Right lobe of liver (tissue), 6 donors: ENCODE measurements at regions of chr12 and their contacts with region 1.

Region 1: DNA sequence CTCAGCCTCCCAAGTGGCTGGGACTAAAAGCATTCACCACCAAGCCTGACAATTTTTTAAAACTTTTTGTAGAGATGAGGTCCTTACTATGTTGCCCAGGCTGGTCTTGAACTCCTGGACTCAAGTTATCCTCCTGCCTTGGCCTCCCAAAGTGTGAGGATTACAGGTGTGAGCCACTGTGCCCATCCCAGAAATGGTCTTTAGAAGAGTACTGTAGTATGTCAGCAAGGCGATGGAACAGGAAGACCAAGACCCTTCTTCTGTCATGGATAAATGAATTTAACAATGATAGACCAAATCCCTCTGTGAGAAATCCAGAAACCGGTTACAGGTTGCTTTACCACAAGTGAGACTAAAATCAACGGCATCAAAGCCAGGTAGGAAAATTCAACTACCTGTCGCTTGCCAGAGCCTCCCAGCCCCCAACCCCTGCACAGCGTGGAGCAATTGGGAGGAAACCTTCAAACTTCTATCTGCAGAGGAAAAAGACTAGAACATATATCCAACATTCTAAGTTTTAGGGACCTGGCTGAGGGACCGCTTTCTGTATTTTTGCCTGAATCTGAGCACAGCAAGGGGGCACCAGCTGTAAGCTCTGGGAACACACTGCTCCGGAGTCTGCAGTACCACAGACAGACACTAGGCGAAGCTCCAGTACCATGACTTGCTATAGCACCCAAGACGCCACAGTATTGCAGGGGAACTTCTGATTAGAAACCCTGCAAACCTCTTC is 51.3 kb downstream of the CPSF6 start:
- DNase-seq: peak; percentile 72 to 77 (median 74)
- ATAC-seq: peak; percentile 100
- H3K4me3 ChIP-seq: no peak overlapping the region
- H3K27ac ChIP-seq: no peak overlapping the region
- H3K4me1 ChIP-seq: no peaks in the 10 kb centered on the region
- H3K27me3 ChIP-seq: no peaks in the 10 kb centered on the region
- CTCF ChIP-seq: peak; percentile 91 to 97 (median 94)
- POLR2A ChIP-seq: no peak

Region 2: DNA sequence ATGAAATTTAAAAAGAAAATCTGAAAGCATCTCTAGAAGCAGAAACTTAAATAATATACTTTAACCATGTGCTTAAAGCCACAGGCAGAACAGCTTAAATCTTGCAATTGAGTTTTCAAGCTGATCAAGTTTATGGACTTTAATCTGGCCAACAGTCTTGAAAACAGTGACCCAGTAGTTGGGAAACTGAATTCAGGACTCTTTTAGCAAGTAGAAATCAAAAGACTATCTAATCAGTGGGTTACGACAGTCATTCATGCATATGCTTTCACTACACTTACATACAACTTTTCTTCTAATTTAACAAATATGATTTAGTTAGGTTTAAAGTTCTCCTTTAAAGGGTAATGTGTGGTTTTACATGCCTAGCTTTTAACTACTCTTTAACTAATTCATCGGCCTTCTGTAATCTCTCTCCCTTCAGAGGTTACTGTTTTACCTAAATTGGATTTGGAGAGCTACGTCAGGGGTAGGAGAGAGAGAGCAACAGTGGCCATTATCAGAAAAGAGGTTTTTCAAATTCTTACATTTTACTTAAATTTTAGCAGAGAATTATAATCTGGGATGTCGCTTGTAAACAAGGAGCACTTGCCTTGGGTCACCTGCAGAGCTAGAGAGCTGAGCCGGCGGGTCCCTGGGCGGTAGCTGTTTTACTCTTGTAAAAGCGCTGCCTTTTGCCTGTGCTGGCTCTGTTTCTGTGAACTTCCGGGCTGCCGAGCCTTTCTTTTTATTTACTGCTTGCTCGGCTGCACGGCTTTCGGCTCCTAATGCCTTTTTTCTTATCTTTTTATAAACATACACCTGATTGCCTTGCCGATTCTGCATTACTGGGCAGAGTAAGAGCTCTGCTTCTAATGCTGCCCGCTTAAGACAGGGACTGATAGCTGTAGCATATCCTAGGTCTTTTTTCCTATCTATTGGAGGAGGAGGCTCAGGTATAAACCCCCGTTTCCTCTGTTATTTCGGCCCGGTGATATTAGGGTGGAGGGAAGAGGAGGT is 40.1 kb after region 1 on chr12:
- intact Hi-C with region 1: no loop called
- DNase-seq: peak; percentile 55 to 78 (median 71)
- ATAC-seq: peak; percentile 57 to 76 (median 69)
- H3K4me3 ChIP-seq: peak overlapping the region; percentile 45 to 57 (median 47)
- H3K27ac ChIP-seq: peak overlapping the region; percentile 81 to 82 (median 81)
- H3K4me1 ChIP-seq: peaks cover 0 to 13% (median 7%) of the 10 kb centered on the region in 4 donors
- H3K27me3 ChIP-seq: no peaks in the 10 kb centered on the region
- CTCF ChIP-seq: no peak
- POLR2A ChIP-seq: peak; percentile 21

Region 3: GRCh38 chr12:69359531-69360347 is 69.0 kb after region 1 on chr12 and contains the start of gene YEATS4:
- intact Hi-C with region 1: loop called in 1 of 2 experiments (anchors 10 kb)
- DNase-seq: peak; percentile 89 to 93 (median 91)
- ATAC-seq: peak; percentile 88 to 94 (median 93)
- H3K4me3 ChIP-seq: peak within 1 kb of the TSS; percentile 73 to 89 (median 85)
- H3K27ac ChIP-seq: peak within 1 kb of the TSS; percentile 93 to 96 (median 96)
- H3K4me1 ChIP-seq: peaks cover 0 to 19% (median 0%) of the 10 kb centered on the region in 4 donors
- H3K27me3 ChIP-seq: no peaks in the 10 kb centered on the region
- CTCF ChIP-seq: peak in 1 of 4 donors; percentile 5
- POLR2A ChIP-seq: peak; percentile 82
- total RNA-seq, gene YEATS4: 2.9 to 17.3 (median 5.8) TPM